GM12878 (cell line): ENCODE measurements at regions of chr15 and their contacts with region 1.

Region 1: DNA sequence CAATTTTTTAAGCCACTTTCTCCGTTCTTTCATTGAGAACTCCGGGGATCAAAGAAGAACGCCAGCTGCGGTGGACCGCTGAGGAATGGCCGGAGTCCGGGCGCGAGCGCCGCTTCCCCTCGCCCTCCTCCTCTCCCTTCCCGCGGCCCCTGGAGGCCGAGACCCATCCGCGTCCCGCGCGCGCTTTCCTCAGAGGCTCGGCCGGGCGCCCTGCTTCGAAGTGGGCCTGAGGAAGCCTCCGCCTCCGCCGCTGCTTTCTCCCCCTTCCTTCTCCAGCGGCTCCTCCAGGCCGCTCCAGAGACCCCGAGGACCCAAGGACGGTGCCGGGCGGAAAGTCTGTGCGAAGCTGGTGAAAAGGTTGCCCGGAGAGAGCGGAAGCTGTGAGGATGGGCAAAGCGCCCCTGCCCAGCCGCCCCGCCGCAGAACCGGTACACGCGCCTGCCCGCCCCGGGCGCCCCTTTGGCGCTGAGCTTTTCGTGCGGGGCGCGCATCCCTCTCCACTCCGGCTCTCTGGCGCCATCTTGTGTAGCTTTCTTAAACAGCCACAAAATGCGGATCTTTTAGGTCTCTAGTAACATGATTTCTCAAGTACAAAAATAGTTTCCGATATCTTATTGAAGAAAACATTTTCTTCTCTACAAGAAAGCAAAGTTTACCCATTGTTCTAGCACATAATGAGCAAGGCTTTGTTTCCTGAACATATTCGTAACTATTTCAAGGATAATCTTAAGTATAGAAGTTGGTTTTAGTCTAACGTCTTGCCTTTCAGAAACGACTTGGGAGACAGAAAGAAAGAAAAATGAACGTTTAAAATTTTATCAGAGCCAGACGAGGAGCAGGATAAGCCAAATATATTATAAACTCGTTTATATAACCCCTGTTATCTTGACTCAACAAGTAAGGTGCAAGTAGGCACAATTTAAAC is 59.2 kb upstream of the FAM174B start:
- DNase-seq: peak; percentile 15
- ATAC-seq: peak; percentile 93
- H3K4me3 ChIP-seq: peak overlapping the region; percentile 64
- H3K27ac ChIP-seq: no peak overlapping the region
- H3K4me1 ChIP-seq: 0 out of 2 replicates have a peak, but pooled peaks cover 3% of the 10 kb centered on the region
- H3K27me3 ChIP-seq: peaks cover 0 to 3% of the 10 kb centered on the region in 2 experiments; a peak in 1 of 4 replicates
- CTCF ChIP-seq: peak; percentile 81 to 96 (median 81); a peak in 5 of 6 replicates
- EP300 ChIP-seq: no peak
- POLR2A ChIP-seq: no peak
- RAD21 ChIP-seq: peak; percentile 91

Region 2: GRCh38 chr15:91482795-91483194 is 1231.9 kb before region 1 on chr15:
- CTCF ChIA-PET with region 1: no interaction called
- POLR2A ChIA-PET with region 1: no interaction called
- RAD21 ChIA-PET with region 1: no interaction called
- SMC1A ChIA-PET with region 1: no interaction called
- in situ Hi-C with region 1: no loop called
- intact Hi-C with region 1: no loop called
- DNase-seq: no peak
- ATAC-seq: peak; percentile 38
- H3K4me3 ChIP-seq: no peak overlapping the region
- H3K27ac ChIP-seq: no peak overlapping the region
- H3K4me1 ChIP-seq: no peaks in the 10 kb centered on the region
- H3K27me3 ChIP-seq: no peaks in the 10 kb centered on the region
- CTCF ChIP-seq: no peak
- EP300 ChIP-seq: no peak
- POLR2A ChIP-seq: no peak
- RAD21 ChIP-seq: no peak

Region 3: DNA sequence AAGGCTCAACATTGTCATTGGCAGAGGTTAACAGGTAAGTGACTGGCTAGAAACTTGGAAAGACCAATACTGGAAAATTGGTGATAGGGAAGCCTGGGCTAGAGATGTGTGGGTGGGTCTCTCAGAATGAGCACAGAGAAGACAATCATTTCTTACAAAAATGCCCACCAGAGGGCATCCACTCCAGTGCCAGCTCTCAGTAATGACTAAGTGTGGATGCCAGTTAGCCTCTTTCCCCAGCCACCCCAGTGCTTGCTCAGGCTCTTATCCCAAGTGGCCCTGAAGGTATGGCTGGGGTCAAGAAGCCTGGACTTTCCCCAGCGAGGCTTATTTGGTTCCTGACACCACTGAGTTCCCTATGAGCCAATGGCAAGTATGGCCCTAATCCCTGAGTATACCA is 437.0 kb before region 1 on chr15:
- CTCF ChIA-PET with region 1: interaction called, 4 read pairs
- POLR2A ChIA-PET with region 1: no interaction called
- RAD21 ChIA-PET with region 1: no interaction called
- SMC1A ChIA-PET with region 1: no interaction called
- in situ Hi-C with region 1: no loop called
- intact Hi-C with region 1: loop called (anchors 2 kb)
- DNase-seq: no peak
- ATAC-seq: peak; percentile 78
- H3K4me3 ChIP-seq: no peak overlapping the region
- H3K27ac ChIP-seq: no peak overlapping the region
- H3K4me1 ChIP-seq: no peaks in the 10 kb centered on the region
- H3K27me3 ChIP-seq: peaks cover 0 to 2% of the 10 kb centered on the region in 2 experiments; a peak in 3 of 4 replicates
- CTCF ChIP-seq: peak; percentile 33 to 39 (median 34); a peak in 3 of 6 replicates
- EP300 ChIP-seq: no peak
- POLR2A ChIP-seq: no peak
- RAD21 ChIP-seq: no peak

Region 4: DNA sequence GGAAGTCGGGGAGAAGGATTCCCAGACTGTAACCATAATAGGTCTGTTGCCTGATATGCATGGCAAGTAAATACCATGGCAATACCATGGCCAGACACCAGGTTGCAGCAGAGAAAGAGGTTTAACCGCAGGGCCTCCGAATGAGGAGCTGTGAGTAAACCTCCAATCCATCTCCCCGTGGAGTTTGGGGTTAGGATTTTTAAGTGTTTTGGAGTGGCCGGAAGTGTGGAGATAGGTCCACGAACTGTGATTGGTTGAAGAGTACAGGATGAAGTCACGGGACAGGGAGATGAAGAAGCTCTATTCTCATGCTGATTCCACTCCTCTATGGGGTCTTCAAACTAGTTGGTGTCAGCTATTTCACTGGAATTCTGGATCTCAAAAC is 193.1 kb before region 1 on chr15:
- CTCF ChIA-PET with region 1: interaction called, 95 read pairs
- POLR2A ChIA-PET with region 1: no interaction called
- RAD21 ChIA-PET with region 1: interaction called, 40 read pairs
- SMC1A ChIA-PET with region 1: interaction called, 29 read pairs
- in situ Hi-C with region 1: loop called (anchors 5 kb)
- intact Hi-C with region 1: loop called (anchors 1 kb)
- DNase-seq: peak; percentile 37
- ATAC-seq: peak; percentile 97
- H3K4me3 ChIP-seq: no peak overlapping the region
- H3K27ac ChIP-seq: no peak overlapping the region
- H3K4me1 ChIP-seq: no peaks in the 10 kb centered on the region
- H3K27me3 ChIP-seq: no peaks in the 10 kb centered on the region
- CTCF ChIP-seq: peak; percentile 72 to 87 (median 75)
- EP300 ChIP-seq: no peak
- POLR2A ChIP-seq: no peak
- RAD21 ChIP-seq: peak; percentile 88

Region 5: GRCh38 chr15:92611993-92612745 is 102.6 kb before region 1 on chr15:
- CTCF ChIA-PET with region 1: interaction called, 16 read pairs
- POLR2A ChIA-PET with region 1: no interaction called
- RAD21 ChIA-PET with region 1: interaction called, 12 read pairs
- SMC1A ChIA-PET with region 1: interaction called, 21 read pairs
- in situ Hi-C with region 1: no loop called
- intact Hi-C with region 1: loop called (anchors 1 kb)
- DNase-seq: no peak
- ATAC-seq: peak; percentile 82
- H3K4me3 ChIP-seq: no peak overlapping the region
- H3K27ac ChIP-seq: no peak overlapping the region
- H3K4me1 ChIP-seq: no peaks in the 10 kb centered on the region
- H3K27me3 ChIP-seq: no peaks in the 10 kb centered on the region
- CTCF ChIP-seq: peak; percentile 25 to 60 (median 36); a peak in 4 of 6 replicates
- EP300 ChIP-seq: no peak
- POLR2A ChIP-seq: no peak
- RAD21 ChIP-seq: peak; percentile 70

Region 6: DNA sequence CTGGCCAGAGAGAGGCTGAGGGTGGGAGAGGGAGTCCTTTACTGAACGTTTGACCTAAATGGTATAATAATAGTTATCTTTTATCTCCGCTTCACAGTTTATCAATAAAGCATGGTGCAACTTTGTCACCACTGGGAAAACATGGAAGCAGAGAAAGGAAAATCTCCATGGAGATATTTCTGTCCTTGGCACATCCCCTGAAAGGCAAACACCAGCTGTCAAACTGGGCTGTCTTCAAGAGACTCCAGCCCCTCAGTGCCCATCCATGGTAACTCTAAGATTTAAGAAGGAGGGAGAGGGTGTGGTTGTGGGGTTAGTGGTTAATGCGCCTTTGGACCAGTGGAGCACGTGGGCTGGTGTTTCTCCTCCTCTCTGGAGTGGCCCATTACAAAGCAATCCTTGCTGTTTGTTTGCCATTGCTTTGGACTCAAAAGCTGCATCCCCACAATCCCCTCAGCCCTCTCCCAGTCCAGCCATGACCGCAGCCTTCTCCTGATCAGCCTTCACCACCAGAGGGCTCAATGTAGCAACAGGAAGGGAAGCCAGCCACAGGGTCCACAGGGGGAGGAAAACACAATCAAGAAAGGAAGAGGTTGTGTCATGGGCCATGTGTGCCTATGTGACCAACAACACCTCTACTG is 20.9 kb before region 1 on chr15:
- CTCF ChIA-PET with region 1: interaction called, 10 read pairs
- POLR2A ChIA-PET with region 1: no interaction called
- RAD21 ChIA-PET with region 1: no interaction called
- SMC1A ChIA-PET with region 1: interaction called, 3 read pairs
- in situ Hi-C with region 1: no loop called
- intact Hi-C with region 1: no loop called
- DNase-seq: no peak
- ATAC-seq: peak; percentile 41; the same call in 2 of the 3 replicates
- H3K4me3 ChIP-seq: no peak overlapping the region
- H3K27ac ChIP-seq: no peak overlapping the region
- H3K4me1 ChIP-seq: no peaks in the 10 kb centered on the region
- H3K27me3 ChIP-seq: no peaks in the 10 kb centered on the region; a peak in 1 of 4 replicates
- CTCF ChIP-seq: peak in 2 of 3 experiments; percentile 24 to 33; a peak in 3 of 6 replicates
- EP300 ChIP-seq: no peak
- POLR2A ChIP-seq: no peak
- RAD21 ChIP-seq: 0 out of 2 replicates have a peak, but pooled peaks have one; percentile 4

Region 7: DNA sequence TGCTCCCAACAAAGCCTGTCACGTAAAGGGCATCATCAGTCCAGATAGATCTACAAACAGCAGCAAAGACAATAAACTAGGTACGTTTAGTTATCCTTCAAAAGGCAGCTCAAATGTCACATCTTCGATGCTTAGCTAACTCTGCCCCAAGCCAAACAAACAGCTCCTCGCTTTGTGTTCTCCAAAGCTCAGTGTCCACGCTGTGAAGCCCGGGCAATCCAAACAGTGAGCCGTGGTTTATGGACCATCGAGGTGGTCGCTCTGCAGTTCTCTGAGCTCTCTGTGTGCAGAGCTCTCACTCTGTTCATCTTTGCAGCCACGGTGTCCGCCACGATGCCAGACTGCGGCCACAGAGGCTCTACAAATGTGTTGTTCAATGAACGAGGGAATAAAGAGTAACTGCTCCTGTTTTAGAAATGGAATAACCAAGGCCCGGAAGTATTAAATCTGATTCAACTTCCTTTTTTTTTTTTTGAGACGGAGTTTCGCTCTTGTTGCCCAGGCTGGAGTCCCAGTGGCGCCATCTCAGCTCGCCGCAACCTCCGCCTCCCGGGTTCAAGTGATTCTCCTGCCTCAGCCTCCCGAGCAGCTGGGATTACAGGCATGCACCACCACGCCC is 58.0 kb after region 1 on chr15:
- CTCF ChIA-PET with region 1: no interaction called
- POLR2A ChIA-PET with region 1: no interaction called
- RAD21 ChIA-PET with region 1: no interaction called
- SMC1A ChIA-PET with region 1: no interaction called
- in situ Hi-C with region 1: no loop called
- intact Hi-C with region 1: no loop called
- DNase-seq: no peak
- ATAC-seq: no peak
- H3K4me3 ChIP-seq: no peak overlapping the region
- H3K27ac ChIP-seq: no peak overlapping the region
- H3K4me1 ChIP-seq: no peaks in the 10 kb centered on the region
- H3K27me3 ChIP-seq: no peaks in the 10 kb centered on the region
- CTCF ChIP-seq: no peak
- EP300 ChIP-seq: no peak
- POLR2A ChIP-seq: no peak
- RAD21 ChIP-seq: no peak